Sciatic nerve (tissue), 2 donors: ENCODE measurements at regions of chr5 and their contacts with region 1.

Region 1: DNA sequence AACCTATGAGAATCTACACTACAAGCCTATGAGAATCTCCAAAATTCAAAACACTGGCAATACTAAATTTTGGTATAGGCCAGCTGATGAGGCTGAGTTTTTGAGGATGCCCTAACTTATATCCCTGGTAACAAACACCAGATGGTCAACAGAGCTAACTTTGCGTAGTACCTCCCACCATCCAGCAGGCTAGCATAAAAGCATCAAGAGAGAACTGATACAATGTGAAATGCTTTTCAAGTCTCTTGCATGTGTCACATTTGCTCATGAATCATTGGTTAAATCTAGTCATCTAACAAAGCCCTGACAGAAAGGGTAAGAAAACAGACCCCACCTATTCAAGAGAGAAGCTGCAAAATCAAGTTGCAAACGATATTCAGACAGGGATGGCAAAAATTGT is 1609.7 kb upstream of the CDH9 start:
- DNase-seq: no peak
- ATAC-seq: no peak

Region 2: DNA sequence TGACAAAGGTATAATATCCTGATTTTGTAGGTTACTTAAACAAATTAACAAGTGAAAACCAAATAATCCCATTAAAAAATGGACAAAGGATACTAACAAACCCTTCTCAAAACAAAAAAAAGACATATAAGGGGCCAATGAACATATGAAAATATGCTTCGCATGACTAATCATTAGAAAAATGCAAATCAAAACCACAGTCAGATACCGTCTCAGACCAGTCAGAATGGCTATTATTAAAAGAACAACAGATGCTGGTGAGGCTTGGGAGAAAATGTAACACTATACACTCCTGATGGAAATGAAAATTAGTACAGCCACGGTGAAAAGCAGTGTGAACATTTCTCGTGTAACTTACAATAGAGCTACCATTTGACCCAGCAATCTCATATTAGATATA is 67.5 kb before region 1 on chr5:
- intact Hi-C with region 1: loop called (anchors 2 kb)
- DNase-seq: no peak
- ATAC-seq: no peak

Region 3: DNA sequence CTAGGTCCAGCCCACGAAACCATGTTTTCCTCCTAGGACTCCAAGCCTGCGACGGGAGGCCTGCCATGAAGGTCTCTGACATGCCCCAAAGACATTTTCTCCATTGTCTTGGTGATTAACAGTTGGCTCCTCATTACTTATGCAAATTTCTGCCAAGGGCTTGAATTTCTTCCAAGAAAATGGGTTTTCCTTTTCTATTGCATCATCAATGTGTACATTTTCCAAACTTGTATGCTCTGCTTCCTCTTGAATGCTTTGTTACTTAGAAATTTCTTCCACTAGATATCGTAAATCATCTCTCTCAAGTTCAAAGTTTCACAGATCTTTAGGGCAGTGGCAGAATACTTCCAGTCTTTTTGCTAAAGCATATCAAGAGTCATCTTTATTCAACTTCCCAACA is 182.9 kb after region 1 on chr5:
- intact Hi-C with region 1: no loop called
- DNase-seq: no peak
- ATAC-seq: no peak

Region 4: GRCh38 chr5:29715167-29715566 is 1067.1 kb after region 1 on chr5:
- intact Hi-C with region 1: no loop called
- DNase-seq: no peak
- ATAC-seq: no peak